MCF 10A (cell line): ENCODE measurements at regions of chr10 and their contacts with region 1.

Region 1: DNA sequence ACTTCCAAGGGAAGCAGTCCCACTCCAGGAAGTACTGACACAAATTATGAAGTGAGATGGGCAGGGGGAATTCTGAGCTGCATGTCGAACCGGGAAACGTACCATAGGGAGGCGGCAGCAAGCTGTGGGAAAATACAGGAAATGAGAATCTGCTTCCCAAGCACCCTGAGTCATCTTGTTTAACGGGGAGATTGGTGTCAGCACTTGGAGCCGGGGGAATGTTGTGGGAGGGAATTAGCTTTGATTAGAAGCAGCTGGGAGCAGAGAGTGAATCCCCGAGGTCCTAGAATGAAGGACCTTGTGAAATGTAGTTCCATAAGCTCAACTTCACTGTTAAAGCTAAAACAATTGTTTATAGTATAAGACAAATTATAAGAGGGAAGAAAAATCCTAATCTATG is 141.4 kb upstream of the PRKCQ start:
- DNase-seq: peak; percentile 94
- H3K4me3 Mint-ChIP-seq: peak overlapping the region; percentile 55
- H3K27ac Mint-ChIP-seq: peak overlapping the region; percentile 95
- H3K4me1 Mint-ChIP-seq: peaks cover 29% of the 10 kb centered on the region
- H3K27me3 Mint-ChIP-seq: no peaks in the 10 kb centered on the region
- CTCF ChIP-seq: peak; percentile 57

Region 2: DNA sequence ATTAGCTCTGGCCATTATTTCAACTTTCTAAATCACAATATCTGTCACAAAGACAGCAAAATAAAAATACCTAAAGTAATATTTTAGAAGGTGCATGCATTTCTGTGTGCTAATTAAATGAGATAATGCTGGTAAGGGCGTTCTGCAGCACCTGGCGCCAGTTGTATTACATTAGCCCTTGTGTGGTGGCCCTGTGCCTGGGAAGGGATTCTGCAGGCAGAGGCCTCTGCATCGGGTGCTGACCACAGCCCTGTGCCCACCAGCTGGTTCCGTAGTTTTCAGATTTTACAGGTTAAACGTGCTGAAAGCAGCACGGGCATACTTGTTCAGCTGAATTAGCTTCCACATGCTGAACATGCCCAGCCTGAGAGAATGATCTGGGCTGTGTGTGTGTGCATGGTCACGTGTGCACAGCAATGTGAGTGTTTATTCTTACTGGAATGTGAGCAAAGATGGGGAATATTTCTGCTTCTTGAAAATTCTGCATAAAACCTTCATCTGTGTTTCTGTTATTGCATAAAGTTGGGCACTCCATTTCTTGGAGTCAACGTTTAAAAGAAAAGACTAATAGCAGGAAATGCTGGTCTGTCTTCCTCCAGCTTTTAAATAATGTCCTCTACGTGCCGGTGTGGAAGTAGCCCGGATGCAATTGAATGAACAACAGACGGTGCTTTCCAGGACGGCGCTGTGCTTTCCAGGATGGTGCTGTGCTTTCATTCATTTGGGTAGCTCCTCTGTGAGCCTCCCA is 16.5 kb after region 1 on chr10:
- CTCF ChIA-PET with region 1: interaction called, 23 read pairs
- POLR2A ChIA-PET with region 1: interaction called, 136 read pairs
- intact Hi-C with region 1: loop called (anchors 1 kb)
- DNase-seq: peak; percentile 63
- H3K4me3 Mint-ChIP-seq: peak overlapping the region; percentile 77
- H3K27ac Mint-ChIP-seq: peak overlapping the region; percentile 23
- H3K4me1 Mint-ChIP-seq: peaks cover 21% of the 10 kb centered on the region
- H3K27me3 Mint-ChIP-seq: no peaks in the 10 kb centered on the region
- CTCF ChIP-seq: no peak

Region 3: DNA sequence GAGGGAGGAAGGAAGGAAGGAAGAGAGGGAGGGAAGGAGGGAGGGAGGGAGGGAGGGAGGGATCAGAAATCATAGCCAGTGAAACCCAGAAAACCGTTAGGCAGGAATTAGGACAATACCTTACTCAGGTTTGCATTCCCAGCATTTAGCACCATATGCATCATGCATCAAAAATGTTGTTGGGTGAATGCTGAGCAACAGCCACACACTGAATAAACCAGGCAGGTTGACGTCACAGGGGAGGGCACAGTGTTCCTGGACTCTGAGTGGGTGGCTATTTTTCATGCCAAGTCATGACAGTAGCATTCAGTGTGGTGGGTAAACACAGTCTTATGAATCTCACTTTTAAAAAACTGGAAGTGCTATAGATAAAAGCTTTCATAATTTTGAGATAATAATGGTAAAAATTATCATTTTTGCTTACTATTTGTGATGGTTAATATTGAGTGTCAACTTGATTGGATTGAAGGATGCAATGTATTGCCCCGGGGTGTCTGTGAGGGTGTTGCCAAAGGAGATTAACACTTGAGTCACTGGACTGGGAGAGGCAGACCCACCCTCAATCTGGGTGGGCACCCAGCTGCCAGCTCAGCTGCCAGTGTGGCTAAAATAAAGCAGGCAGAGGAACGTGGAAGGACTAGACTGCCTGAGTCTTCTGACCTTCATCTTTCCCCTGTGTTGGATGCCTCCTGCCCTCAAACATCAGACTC is 57.7 kb after region 1 on chr10:
- CTCF ChIA-PET with region 1: interaction called, 9 read pairs
- POLR2A ChIA-PET with region 1: interaction called, 21 read pairs
- intact Hi-C with region 1: loop called (anchors 1 kb)
- DNase-seq: peak; percentile 99
- H3K4me3 Mint-ChIP-seq: peak overlapping the region; percentile 76
- H3K27ac Mint-ChIP-seq: peak overlapping the region; percentile 98
- H3K4me1 Mint-ChIP-seq: peaks cover 65% of the 10 kb centered on the region
- H3K27me3 Mint-ChIP-seq: no peaks in the 10 kb centered on the region
- CTCF ChIP-seq: no peak

Region 4: GRCh38 chr10:6912424-6912823 is 190.9 kb after region 1 on chr10:
- CTCF ChIA-PET with region 1: interaction called, 6 read pairs
- POLR2A ChIA-PET with region 1: interaction called, 17 read pairs
- intact Hi-C with region 1: loop called (anchors 2 kb)
- DNase-seq: peak; percentile 89
- H3K4me3 Mint-ChIP-seq: no peak overlapping the region
- H3K27ac Mint-ChIP-seq: no peak overlapping the region
- H3K4me1 Mint-ChIP-seq: peaks cover 5% of the 10 kb centered on the region
- H3K27me3 Mint-ChIP-seq: no peaks in the 10 kb centered on the region
- CTCF ChIP-seq: no peak

Region 5: GRCh38 chr10:7410862-7411670 is 689.6 kb after region 1 on chr10 and contains the start of gene SFMBT2:
- CTCF ChIA-PET with region 1: interaction called, 7 read pairs
- POLR2A ChIA-PET with region 1: interaction called, 14 read pairs
- intact Hi-C with region 1: no loop called
- DNase-seq: peak; percentile 68
- H3K4me3 Mint-ChIP-seq: peak within 1 kb of the TSS; percentile 86
- H3K27ac Mint-ChIP-seq: peak within 1 kb of the TSS; percentile 14
- H3K4me1 Mint-ChIP-seq: peaks cover 9% of the 10 kb centered on the region
- H3K27me3 Mint-ChIP-seq: no peaks in the 10 kb centered on the region
- CTCF ChIP-seq: peak; percentile 10
- total RNA-seq, gene SFMBT2: 5.8 and 7.4 TPM in 2 replicates